ENCODE measurements at regions of chr3 and their contacts with region 1.

Region 1: GRCh38 chr3:48556793-48557626 is at the start of gene PFKFB4:
- H3K4me3 ChIP-seq: peak within 1 kb of the TSS; percentile 71
- H3K27ac ChIP-seq: peak within 1 kb of the TSS; percentile 10; the same call in 1 of the 2 replicates
- H3K4me1 ChIP-seq: no peaks in the 10 kb centered on the region
- CTCF ChIP-seq: no peak

Region 2: GRCh38 chr3:48372377-48372770 is 184.6 kb before region 1 on chr3:
- CTCF ChIA-PET with region 1: no interaction called
- POLR2A ChIA-PET with region 1: no interaction called
- H3K4me3 ChIP-seq: no peak overlapping the region
- H3K27ac ChIP-seq: no peak overlapping the region
- H3K4me1 ChIP-seq: no peaks in the 10 kb centered on the region
- CTCF ChIP-seq: no peak

Region 3: DNA sequence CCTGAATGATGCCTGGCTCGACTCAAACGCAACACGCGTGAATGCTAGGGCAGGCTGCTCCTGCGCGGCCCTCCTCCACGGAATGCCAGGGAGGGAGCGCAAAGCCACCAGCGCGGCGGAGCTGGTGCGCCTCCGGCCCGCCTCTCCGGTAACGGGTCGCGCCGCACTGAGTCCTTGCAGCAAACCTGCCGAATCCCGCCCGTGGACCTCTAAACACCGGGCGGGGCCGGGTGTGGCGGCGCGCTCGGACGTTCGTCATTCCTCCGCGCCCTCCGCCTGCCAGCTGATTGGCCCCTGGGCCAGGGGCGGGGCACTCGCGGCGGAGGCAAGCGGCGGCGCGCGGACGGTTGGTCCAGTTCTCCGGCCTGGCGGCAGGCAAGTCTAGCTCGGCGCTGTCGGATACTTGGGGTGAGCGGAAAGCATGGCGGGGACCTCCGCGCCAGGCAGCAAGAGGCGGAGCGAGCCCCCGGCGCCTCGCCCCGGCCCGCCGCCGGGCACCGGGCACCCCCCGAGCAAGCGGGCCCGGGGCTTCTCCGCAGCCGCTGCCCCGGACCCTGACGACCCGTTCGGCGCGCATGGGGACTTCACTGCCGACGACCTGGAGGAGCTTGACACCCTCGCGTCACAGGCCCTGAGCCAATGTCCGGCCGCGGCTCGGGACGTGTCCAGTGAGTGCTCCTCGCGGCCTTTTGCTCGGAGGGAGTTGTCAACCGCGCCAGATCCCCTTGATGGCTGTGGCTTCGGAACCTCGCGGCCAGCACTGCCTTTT is 110.4 kb before region 1 on chr3 and contains the start of gene ATRIP:
- CTCF ChIA-PET with region 1: interaction called, 4 read pairs
- POLR2A ChIA-PET with region 1: interaction called, 12 read pairs
- H3K4me3 ChIP-seq: peak within 1 kb of the TSS; percentile 99
- H3K27ac ChIP-seq: peak within 1 kb of the TSS; percentile 50; the same call in 1 of the 2 replicates
- H3K4me1 ChIP-seq: no peaks in the 10 kb centered on the region; the same call in 1 of the 2 replicates
- CTCF ChIP-seq: no peak

Region 4: GRCh38 chr3:48467110-48467454 is 89.9 kb before region 1 on chr3:
- CTCF ChIA-PET with region 1: no interaction called
- POLR2A ChIA-PET with region 1: no interaction called
- H3K4me3 ChIP-seq: no peak overlapping the region
- H3K27ac ChIP-seq: no peak overlapping the region
- H3K4me1 ChIP-seq: no peaks in the 10 kb centered on the region
- CTCF ChIP-seq: no peak

Region 5: GRCh38 chr3:48635222-48636021 is 78.4 kb after region 1 on chr3 and contains the start of gene SLC26A6:
- CTCF ChIA-PET with region 1: interaction called, 14 read pairs
- POLR2A ChIA-PET with region 1: interaction called, 3 read pairs
- H3K4me3 ChIP-seq: peak within 1 kb of the TSS; percentile 75
- H3K27ac ChIP-seq: peak within 1 kb of the TSS; percentile 55; the same call in 1 of the 2 replicates
- H3K4me1 ChIP-seq: no peaks in the 10 kb centered on the region
- CTCF ChIP-seq: no peak; the same call in 1 of the 2 replicates

Measured in HEK293 (cell line).